ENCODE measurements at regions of chr9 and their contacts with region 1.

Region 1: GRCh38 chr9:92723299-92723625 is 41.4 kb downstream of the BICD2 start:
- DNase-seq: peak; percentile 98
- H3K4me3 ChIP-seq: no peak overlapping the region
- H3K27ac ChIP-seq: peak overlapping the region; percentile 94
- H3K4me1 ChIP-seq: peaks cover 30% of the 10 kb centered on the region
- H3K27me3 ChIP-seq: no peaks in the 10 kb centered on the region
- CTCF ChIP-seq: no peak

Region 2: DNA sequence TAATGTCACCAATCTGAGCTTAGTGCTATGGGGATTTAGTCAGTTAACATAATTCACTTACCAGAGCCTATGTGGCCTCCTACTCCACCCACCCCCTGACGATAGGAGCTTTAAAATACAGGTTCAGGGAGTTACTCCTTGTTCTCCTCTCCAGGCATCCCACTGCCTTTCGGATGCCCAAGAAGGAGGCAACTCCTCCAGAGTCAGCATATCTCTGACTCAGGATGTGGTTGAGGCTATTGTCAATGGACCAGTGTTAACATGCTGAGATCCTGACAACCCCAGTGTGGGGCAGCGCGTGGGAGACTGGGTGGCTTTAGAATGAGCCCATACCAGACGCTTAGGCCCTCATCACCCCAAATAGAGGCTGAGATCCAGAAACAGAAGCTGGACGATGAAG is 13.9 kb after region 1 on chr9:
- CTCF ChIA-PET with region 1: no interaction called
- dilution Hi-C with region 1: no loop called
- in situ Hi-C with region 1: no loop called
- intact Hi-C with region 1: loop called (anchors 2 kb)
- DNase-seq: peak; percentile 91
- H3K4me3 ChIP-seq: no peak overlapping the region
- H3K27ac ChIP-seq: peak overlapping the region; percentile 73
- H3K4me1 ChIP-seq: peaks cover 63% of the 10 kb centered on the region
- H3K27me3 ChIP-seq: no peaks in the 10 kb centered on the region
- CTCF ChIP-seq: no peak

Region 3: GRCh38 chr9:93082841-93083411 is 359.7 kb after region 1 on chr9:
- CTCF ChIA-PET with region 1: no interaction called
- dilution Hi-C with region 1: no loop called
- in situ Hi-C with region 1: no loop called
- intact Hi-C with region 1: no loop called
- DNase-seq: no peak
- H3K4me3 ChIP-seq: no peak overlapping the region
- H3K27ac ChIP-seq: no peak overlapping the region
- H3K4me1 ChIP-seq: no peaks in the 10 kb centered on the region
- H3K27me3 ChIP-seq: no peaks in the 10 kb centered on the region
- CTCF ChIP-seq: no peak

Measured in mammary epithelial cell (primary cell).